Heart right ventricle (tissue), 16 donors: ENCODE measurements at regions of chr17 and their contacts with region 1.

Region 1: DNA sequence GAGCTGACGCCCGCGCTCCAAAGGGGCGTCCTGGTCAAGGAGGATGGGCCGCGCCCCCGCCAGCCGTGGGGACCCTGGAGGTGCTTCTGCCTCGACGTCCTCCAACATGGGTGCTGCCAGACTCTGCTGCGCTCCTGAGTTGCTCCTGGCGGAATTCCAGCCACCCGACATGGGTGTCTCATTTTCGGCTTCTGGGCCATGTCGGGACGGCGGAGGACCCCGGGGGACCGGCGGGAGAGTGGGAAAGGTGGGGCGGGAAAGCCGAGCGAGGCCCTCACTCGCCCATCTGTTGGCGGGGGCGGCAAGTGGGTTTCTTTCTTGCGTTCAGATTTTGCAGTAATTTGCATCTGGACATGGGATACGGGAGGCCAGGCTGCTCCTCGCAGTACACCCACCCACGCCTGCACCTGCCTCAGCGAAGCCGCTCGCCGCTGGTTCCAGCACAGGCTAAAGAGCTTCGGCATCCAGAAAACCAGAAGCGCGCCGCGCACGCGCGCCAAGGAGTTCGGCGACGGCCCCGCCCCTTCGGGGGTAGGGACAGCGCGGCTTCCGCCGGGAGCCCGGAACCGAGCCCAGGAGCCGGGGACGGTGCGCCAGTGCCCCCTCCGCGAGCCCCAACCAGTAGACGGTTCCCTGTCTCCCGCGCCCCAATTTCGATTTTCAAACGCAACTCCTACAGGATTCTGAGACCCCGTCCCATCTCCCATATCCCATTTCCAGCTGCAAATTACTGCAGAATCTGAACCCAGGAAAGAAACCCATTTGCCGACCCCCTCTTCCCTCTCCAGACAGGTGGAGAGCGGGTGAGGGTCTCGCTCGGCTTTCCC is at the start of gene ARMC7:
- DNase-seq: peak; percentile 90 to 95
- ATAC-seq: peak; percentile 87 to 91 (median 90)
- H3K4me3 ChIP-seq: peak within 1 kb of the TSS; percentile 68 to 96 (median 86)
- H3K27ac ChIP-seq: peak within 1 kb of the TSS; percentile 35 to 91 (median 86)
- H3K4me1 ChIP-seq: peaks cover 5 to 52% (median 31%) of the 10 kb centered on the region in 9 donors
- H3K27me3 ChIP-seq: no peaks in the 10 kb centered on the region
- CTCF ChIP-seq: no peak
- total RNA-seq, gene ARMC7: 4.7 to 7.9 (median 5.2) TPM

Region 2: GRCh38 chr17:74972107-74972972 is 137.3 kb before region 1 on chr17 and contains the start of gene HID1:
- intact Hi-C with region 1: loop called in 1 of 10 experiments (anchors 10 kb)
- DNase-seq: peak; percentile 45 to 74
- ATAC-seq: peak; percentile 62 to 79 (median 72)
- H3K4me3 ChIP-seq: peak within 1 kb of the TSS; percentile 53 to 90 (median 73)
- H3K27ac ChIP-seq: peak within 1 kb of the TSS; percentile 54 to 86 (median 76)
- H3K4me1 ChIP-seq: peaks cover 5 to 34% (median 22%) of the 10 kb centered on the region in 9 donors
- H3K27me3 ChIP-seq: peaks cover 0 to 51% (median 0%) of the 10 kb centered on the region in 7 donors
- CTCF ChIP-seq: no peak
- total RNA-seq, gene HID1: 3.9 to 15.5 (median 9.5) TPM

Region 3: DNA sequence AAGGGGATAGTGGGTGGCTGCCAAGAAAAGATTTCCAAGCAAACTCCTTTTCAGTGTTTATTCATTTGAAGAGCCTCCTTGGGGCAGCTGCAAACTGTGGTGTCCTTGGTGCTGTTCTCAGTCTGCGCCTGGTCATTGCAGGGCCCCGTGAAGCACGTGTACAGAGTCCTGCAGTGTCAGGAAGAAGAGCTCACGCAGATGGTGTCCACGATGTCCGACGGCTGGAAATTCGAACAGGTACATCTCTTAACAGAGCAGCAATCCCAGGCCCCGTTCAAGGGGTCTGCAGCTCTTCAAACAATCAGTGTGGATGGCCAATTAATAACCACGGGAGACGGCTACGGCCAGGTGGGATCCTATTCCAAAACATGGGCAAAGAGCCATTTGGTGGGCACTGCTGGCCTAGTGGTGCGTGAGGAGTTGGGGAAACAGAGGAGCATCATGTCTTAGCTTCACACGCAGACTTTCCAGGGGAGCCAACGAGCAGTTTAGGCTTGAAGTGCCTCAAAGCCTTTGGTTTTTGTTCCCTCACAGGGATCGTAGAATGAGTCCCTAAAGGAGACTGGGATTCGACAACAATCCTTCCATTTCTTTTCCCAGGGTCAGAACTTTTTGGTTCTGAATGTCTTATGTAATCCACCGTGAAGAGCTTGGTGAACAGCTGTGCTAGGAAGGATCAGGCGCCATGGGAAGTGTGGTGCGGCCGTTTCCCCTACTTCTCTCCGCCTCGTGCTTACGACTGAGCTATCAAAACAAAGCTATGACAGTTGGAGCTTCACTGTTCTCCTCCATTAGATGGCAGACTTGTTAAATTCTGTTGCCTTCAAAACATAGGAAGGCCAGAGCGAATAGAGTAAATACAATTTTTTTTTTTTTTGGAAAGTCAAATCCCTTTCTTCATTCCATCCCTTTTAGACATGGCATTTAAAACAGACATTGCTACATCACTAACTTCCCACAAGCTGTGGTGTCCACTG is 50.0 kb before region 1 on chr17:
- intact Hi-C with region 1: loop called in 1 of 10 experiments (anchors 5 kb)
- DNase-seq: peak in 1 of 2 donors; percentile 55
- ATAC-seq: peak; percentile 50 to 94 (median 88)
- H3K4me3 ChIP-seq: no peak overlapping the region
- H3K27ac ChIP-seq: peak overlapping the region in 9 of 10 donors; percentile 40 to 76 (median 68)
- H3K4me1 ChIP-seq: peaks cover 0 to 20% (median 14%) of the 10 kb centered on the region in 9 donors
- H3K27me3 ChIP-seq: no peaks in the 10 kb centered on the region
- CTCF ChIP-seq: peak in 8 of 9 donors; percentile 9 to 69 (median 52)

Region 4: DNA sequence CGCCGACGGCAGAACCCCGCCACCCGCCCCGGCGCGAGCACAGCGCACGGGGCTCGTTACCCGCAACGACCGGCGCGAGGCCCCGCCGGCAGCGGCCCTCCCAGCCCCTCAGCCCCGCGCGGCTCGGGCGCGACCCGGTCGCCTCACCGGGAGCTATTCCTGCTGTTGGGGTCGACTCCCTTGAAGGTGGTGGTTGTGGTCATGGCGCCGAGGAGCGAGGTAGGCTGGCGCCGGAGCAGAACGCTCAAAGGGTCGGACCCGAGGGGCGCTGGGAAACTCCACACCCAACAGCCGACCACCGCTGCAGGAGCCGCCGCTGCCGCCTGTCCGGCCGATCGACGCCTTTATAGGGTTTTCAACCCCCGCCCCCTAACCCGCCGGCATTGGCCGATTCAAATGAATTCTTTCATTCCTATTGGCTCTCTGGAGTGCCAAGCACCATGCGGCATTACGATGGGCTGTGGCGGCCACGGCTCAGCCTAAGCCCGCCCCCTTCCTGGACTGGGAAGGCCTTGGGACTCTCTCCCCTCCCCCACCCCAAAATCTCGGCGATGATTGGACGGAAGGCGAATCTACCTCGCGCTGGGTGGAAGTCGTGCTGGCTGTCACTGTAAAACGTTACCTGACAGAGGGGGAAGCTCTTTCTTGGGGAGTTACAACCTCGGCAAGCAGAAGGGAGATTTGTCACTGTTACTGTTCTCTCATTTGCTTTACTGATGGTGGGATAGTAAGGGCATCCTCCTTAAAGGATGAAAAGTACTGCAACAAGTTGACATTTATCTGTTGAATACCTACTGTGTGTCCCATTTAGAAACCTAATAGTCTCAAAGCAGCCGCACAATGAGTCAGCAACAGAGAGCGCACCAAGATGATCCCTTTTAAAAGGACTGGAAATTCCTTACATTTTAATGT is 44.8 kb after region 1 on chr17 and contains the start of gene JPT1:
- intact Hi-C with region 1: loop called in 2 of 10 experiments (anchors 5 kb)
- DNase-seq: peak; percentile 96 to 99
- ATAC-seq: peak; percentile 100
- H3K4me3 ChIP-seq: peak within 1 kb of the TSS; percentile 43 to 93 (median 80)
- H3K27ac ChIP-seq: peak within 1 kb of the TSS in 9 of 10 donors; percentile 52 to 94 (median 84)
- H3K4me1 ChIP-seq: peaks cover 0 to 26% (median 13%) of the 10 kb centered on the region in 9 donors
- H3K27me3 ChIP-seq: no peaks in the 10 kb centered on the region
- CTCF ChIP-seq: no peak
- total RNA-seq, gene JPT1: 6.7 to 30.0 (median 12.6) TPM

Region 5: GRCh38 chr17:75199886-75200618 is 90.4 kb after region 1 on chr17:
- intact Hi-C with region 1: loop called in 8 of 10 experiments (anchors 2 to 10 kb)
- DNase-seq: no peak
- ATAC-seq: no peak
- H3K4me3 ChIP-seq: no peak overlapping the region
- H3K27ac ChIP-seq: no peak overlapping the region
- H3K4me1 ChIP-seq: peaks cover 0 to 11% (median 6%) of the 10 kb centered on the region in 9 donors
- H3K27me3 ChIP-seq: no peaks in the 10 kb centered on the region
- CTCF ChIP-seq: no peak

Region 6: GRCh38 chr17:75412455-75413317 is 303.1 kb after region 1 on chr17:
- intact Hi-C with region 1: loop called in 3 of 10 experiments (anchors 10 kb)
- DNase-seq: peak; percentile 30 to 61
- ATAC-seq: peak in 6 of 8 donors; percentile 58 to 77 (median 70)
- H3K4me3 ChIP-seq: peak overlapping the region in 4 of 10 donors; percentile 9 to 27 (median 22)
- H3K27ac ChIP-seq: no peak overlapping the region
- H3K4me1 ChIP-seq: peaks cover 0 to 19% (median 11%) of the 10 kb centered on the region in 9 donors
- H3K27me3 ChIP-seq: no peaks in the 10 kb centered on the region
- CTCF ChIP-seq: peak; percentile 50 to 88 (median 82)

Region 7: GRCh38 chr17:75693500-75694481 is 584.2 kb after region 1 on chr17:
- intact Hi-C with region 1: no loop called
- DNase-seq: peak; percentile 76 to 78
- ATAC-seq: peak; percentile 73 to 91 (median 85)
- H3K4me3 ChIP-seq: no peak overlapping the region
- H3K27ac ChIP-seq: peak overlapping the region; percentile 58 to 97 (median 85)
- H3K4me1 ChIP-seq: peaks cover 18 to 97% (median 71%) of the 10 kb centered on the region in 9 donors
- H3K27me3 ChIP-seq: no peaks in the 10 kb centered on the region
- CTCF ChIP-seq: peak in 1 of 9 donors; percentile 29